ENCODE measurements at regions of chr2 and their contacts with region 1.

Region 1: DNA sequence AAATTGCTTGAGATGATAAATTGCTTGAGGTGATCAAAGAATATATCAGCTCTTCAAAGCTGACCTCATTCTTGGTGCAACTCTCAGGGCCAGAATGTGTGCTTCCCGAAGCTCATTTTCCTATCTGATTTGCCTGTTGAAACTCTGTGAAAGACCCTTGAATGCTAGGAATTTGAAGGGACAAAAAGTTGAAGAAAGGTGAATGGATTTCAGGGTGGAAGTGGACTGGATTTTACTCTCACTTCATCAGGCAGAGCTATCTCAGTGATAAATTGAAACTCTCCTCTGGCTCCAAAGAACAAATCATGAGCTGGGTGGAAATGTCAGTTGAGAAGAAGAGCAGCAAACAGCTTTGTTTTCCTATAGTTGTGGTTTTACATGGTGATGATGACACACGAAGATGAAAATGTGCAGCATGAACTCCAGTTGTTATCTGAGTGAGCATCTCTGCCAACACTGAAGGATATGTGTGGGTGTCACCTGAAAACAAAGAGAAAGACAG is 34.4 kb downstream of the CD28 start:
- DNase-seq: no peak
- ATAC-seq: peak; percentile 65
- H3K4me3 Mint-ChIP-seq: peak overlapping the region; percentile 74
- H3K27ac Mint-ChIP-seq: peak overlapping the region; percentile 97
- H3K4me1 Mint-ChIP-seq: peaks cover 64% of the 10 kb centered on the region
- H3K27me3 Mint-ChIP-seq: no peaks in the 10 kb centered on the region

Region 2: DNA sequence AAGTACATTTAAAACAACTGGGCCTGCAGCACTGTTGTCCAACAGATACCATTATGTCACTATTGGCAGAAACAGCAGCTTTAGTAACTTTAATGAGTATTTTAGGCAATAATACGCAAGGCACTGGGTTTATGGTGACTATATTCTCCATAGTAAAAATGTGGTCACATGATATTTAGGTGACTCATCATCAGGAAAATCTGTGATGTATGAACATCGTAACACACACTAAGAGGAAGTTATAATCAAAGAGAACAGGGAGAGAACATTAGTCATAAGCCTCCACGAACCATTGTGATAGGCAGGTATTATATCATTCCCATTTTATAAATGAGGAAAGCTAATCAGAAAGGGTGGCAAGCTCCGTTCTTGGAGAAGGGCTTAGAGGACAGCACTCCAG is 242.7 kb before region 1 on chr2:
- POLR2A ChIA-PET with region 1: interaction called, 12 read pairs
- DNase-seq: no peak
- ATAC-seq: no peak
- H3K4me3 Mint-ChIP-seq: no peak overlapping the region
- H3K27ac Mint-ChIP-seq: no peak overlapping the region
- H3K4me1 Mint-ChIP-seq: peaks cover 5% of the 10 kb centered on the region
- H3K27me3 Mint-ChIP-seq: peaks cover 3% of the 10 kb centered on the region

Region 3: GRCh38 chr2:203706403-203706802 is 34.4 kb before region 1 on chr2 and contains the start of gene CD28:
- POLR2A ChIA-PET with region 1: interaction called, 22 read pairs
- DNase-seq: peak; percentile 82
- ATAC-seq: peak; percentile 84
- H3K4me3 Mint-ChIP-seq: peak within 1 kb of the TSS; percentile 89
- H3K27ac Mint-ChIP-seq: peak within 1 kb of the TSS; percentile 98
- H3K4me1 Mint-ChIP-seq: peaks cover 57% of the 10 kb centered on the region
- H3K27me3 Mint-ChIP-seq: no peaks in the 10 kb centered on the region
- total RNA-seq, gene CD28: 52.7 to 58.9 TPM

Region 4: GRCh38 chr2:203718087-203718486 is 22.7 kb before region 1 on chr2:
- POLR2A ChIA-PET with region 1: interaction called, 69 read pairs
- DNase-seq: peak; percentile 69
- ATAC-seq: peak; percentile 84
- H3K4me3 Mint-ChIP-seq: peak overlapping the region; percentile 56
- H3K27ac Mint-ChIP-seq: peak overlapping the region; percentile 83
- H3K4me1 Mint-ChIP-seq: peaks cover 82% of the 10 kb centered on the region
- H3K27me3 Mint-ChIP-seq: no peaks in the 10 kb centered on the region

Region 5: GRCh38 chr2:203730076-203730729 is 10.6 kb before region 1 on chr2:
- POLR2A ChIA-PET with region 1: interaction called, 31 read pairs
- DNase-seq: no peak
- ATAC-seq: peak; percentile 55
- H3K4me3 Mint-ChIP-seq: peak overlapping the region; percentile 31
- H3K27ac Mint-ChIP-seq: peak overlapping the region; percentile 59
- H3K4me1 Mint-ChIP-seq: peaks cover 56% of the 10 kb centered on the region
- H3K27me3 Mint-ChIP-seq: no peaks in the 10 kb centered on the region

Region 6: GRCh38 chr2:204024503-204024902 is 283.7 kb after region 1 on chr2:
- POLR2A ChIA-PET with region 1: no interaction called
- DNase-seq: no peak
- ATAC-seq: no peak
- H3K4me3 Mint-ChIP-seq: no peak overlapping the region
- H3K27ac Mint-ChIP-seq: no peak overlapping the region
- H3K4me1 Mint-ChIP-seq: peaks cover 15% of the 10 kb centered on the region
- H3K27me3 Mint-ChIP-seq: no peaks in the 10 kb centered on the region